AG04450 (cell line): ENCODE measurements at regions of chr5 and their contacts with region 1.

Region 1: GRCh38 chr5:133247881-133248624 is 196.2 kb downstream of the HSPA4 start:
- DNase-seq: no peak
- H3K4me3 ChIP-seq: no peak overlapping the region
- H3K27ac ChIP-seq: no peak overlapping the region
- H3K27me3 ChIP-seq: peaks cover 7% of the 10 kb centered on the region
- CTCF ChIP-seq: peak; percentile 59

Region 2: DNA sequence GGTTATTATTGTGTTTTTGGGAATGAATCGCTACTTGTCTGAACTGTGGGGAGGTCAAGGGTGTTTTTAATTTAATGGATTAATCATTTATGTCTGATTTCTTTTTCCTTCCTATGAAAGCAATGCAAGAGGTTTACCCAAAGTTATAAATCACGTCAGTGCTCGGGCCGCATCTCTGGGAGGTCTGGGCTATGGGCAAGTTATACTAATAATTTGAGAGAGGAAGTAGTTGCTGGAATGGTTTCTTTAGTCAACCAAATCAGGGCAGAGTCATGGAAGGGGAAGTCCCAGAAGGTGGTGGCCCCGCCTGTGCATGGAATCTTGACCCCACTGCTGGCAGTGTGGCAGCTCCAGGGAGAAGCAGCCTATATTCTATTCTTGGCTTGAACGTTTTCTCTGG is 16.0 kb before region 1 on chr5:
- CTCF ChIA-PET with region 1: no interaction called
- POLR2A ChIA-PET with region 1: no interaction called
- DNase-seq: no peak
- H3K4me3 ChIP-seq: no peak overlapping the region
- H3K27ac ChIP-seq: no peak overlapping the region
- H3K27me3 ChIP-seq: peaks cover 2% of the 10 kb centered on the region
- CTCF ChIP-seq: no peak

Region 3: GRCh38 chr5:133260715-133261114 is 12.7 kb after region 1 on chr5:
- CTCF ChIA-PET with region 1: interaction called, 11 read pairs
- POLR2A ChIA-PET with region 1: no interaction called
- DNase-seq: no peak
- H3K4me3 ChIP-seq: no peak overlapping the region
- H3K27ac ChIP-seq: no peak overlapping the region
- H3K27me3 ChIP-seq: peaks cover 46% of the 10 kb centered on the region
- CTCF ChIP-seq: peak; percentile 42